ENCODE measurements at regions of chr1 and their contacts with region 1.

Region 1: GRCh38 chr1:31955917-31956736 is 18.0 kb upstream of the PTP4A2 start:
- DNase-seq: peak; percentile 100
- ATAC-seq: peak; percentile 85
- H3K4me3 ChIP-seq: peak overlapping the region; percentile 3; the same call in 1 of the 2 replicates
- H3K27ac ChIP-seq: peak overlapping the region; percentile 96
- H3K4me1 ChIP-seq: peaks cover 23% of the 10 kb centered on the region
- H3K27me3 ChIP-seq: no peaks in the 10 kb centered on the region
- CTCF ChIP-seq: peak; percentile 63
- POLR2A ChIP-seq: peak; percentile 84
- RAD21 ChIP-seq: peak; percentile 74

Region 2: DNA sequence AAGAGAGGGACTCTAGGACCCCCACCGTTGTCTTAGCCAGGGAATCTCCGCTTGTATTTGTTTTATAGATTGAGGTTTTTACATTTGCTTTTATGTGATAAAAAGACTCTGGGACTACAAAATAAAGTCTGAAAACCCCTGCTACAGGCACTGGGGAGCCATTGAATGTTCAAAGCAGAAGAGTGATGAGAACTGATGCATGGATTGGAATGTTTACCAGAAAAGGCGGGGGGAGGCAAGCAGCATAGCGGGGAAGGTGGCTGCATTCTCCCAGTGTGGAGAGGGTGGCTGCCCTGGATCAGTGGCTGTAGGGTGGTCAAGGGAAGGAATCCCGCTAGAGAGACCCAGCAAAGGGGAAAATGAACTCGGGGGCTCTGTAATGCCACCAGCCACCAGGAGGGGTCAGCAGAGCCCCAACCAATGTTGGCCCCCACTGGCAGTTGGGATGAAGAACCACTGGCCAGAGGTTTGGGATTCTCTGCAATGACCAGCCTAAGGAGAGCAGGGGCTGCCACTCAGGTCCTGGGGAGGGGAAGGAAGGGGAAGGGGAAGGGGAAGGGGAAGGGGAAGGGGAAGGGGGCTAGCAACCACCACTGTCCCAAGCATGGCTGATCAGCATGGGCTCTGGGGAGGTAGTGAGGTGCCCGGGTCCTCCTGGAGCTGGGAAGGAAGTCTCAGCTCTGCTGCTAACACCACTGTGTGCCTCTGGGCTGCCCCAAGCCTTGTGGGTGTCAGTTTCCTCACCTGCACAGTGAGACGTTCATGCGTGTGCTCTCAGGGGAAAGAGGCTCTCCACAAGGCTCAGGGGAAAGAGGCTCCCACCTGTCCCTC is 292.3 kb before region 1 on chr1:
- CTCF ChIA-PET with region 1: no interaction called
- POLR2A ChIA-PET with region 1: no interaction called
- dilution Hi-C with region 1: no loop called
- in situ Hi-C with region 1: loop called (anchors 5 kb)
- intact Hi-C with region 1: loop called (anchors 5 kb)
- DNase-seq: peak; percentile 22
- ATAC-seq: peak; percentile 84
- H3K4me3 ChIP-seq: no peak overlapping the region
- H3K27ac ChIP-seq: no peak overlapping the region
- H3K4me1 ChIP-seq: peaks cover 3% of the 10 kb centered on the region
- H3K27me3 ChIP-seq: no peaks in the 10 kb centered on the region
- CTCF ChIP-seq: peak; percentile 95
- POLR2A ChIP-seq: peak; percentile 21; the same call in 1 of the 2 replicates
- RAD21 ChIP-seq: peak; percentile 96

Region 3: DNA sequence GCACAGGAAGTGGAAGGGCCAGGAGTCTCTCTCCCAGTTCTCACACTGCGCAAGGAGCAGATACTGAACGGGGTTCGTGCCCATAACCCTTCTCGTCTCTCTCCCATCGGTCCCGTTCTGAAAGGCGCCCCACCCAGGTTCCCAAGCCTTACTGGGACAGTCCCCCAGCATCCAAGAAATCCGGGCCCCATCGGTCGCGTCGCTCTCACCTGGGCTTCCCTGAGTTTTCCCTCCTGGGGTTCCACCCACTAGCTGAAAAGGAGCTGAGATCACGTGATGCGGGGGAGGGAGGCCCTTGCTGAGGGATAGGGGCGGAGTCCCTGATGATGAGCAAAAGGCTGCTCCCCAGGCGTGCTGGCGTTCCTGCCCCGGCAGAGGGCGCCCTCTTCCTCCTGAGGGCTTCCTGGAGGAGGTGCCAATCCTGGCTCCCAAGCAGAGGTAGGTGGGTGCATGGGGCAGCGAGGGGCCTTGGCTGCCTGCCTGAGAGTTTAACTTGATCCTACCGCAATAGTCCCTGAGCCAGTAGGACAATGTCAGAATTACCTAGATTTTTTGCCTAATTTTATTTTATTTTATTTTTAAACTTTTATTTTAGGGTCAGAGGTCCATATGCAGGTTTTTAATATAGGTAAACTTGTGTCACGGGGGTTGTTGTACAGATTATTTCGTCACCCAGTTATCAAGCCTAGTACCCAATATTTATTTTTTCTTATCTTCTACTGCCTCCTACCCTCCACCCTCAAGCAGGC is 140.2 kb before region 1 on chr1 and contains the start of gene SPOCD1:
- CTCF ChIA-PET with region 1: interaction called, 3 read pairs
- POLR2A ChIA-PET with region 1: no interaction called
- dilution Hi-C with region 1: no loop called
- in situ Hi-C with region 1: loop called (anchors 5 kb)
- intact Hi-C with region 1: no loop called
- DNase-seq: peak; percentile 76
- ATAC-seq: peak; percentile 95
- H3K4me3 ChIP-seq: peak within 1 kb of the TSS; percentile 26; the same call in 1 of the 2 replicates
- H3K27ac ChIP-seq: no peak within 1 kb of the TSS
- H3K4me1 ChIP-seq: peaks cover 3% of the 10 kb centered on the region
- H3K27me3 ChIP-seq: no peaks in the 10 kb centered on the region
- CTCF ChIP-seq: peak; percentile 94
- POLR2A ChIP-seq: no peak
- RAD21 ChIP-seq: peak; percentile 77
- total RNA-seq, gene SPOCD1: 42.2 and 59.7 TPM in 2 replicates

Region 4: DNA sequence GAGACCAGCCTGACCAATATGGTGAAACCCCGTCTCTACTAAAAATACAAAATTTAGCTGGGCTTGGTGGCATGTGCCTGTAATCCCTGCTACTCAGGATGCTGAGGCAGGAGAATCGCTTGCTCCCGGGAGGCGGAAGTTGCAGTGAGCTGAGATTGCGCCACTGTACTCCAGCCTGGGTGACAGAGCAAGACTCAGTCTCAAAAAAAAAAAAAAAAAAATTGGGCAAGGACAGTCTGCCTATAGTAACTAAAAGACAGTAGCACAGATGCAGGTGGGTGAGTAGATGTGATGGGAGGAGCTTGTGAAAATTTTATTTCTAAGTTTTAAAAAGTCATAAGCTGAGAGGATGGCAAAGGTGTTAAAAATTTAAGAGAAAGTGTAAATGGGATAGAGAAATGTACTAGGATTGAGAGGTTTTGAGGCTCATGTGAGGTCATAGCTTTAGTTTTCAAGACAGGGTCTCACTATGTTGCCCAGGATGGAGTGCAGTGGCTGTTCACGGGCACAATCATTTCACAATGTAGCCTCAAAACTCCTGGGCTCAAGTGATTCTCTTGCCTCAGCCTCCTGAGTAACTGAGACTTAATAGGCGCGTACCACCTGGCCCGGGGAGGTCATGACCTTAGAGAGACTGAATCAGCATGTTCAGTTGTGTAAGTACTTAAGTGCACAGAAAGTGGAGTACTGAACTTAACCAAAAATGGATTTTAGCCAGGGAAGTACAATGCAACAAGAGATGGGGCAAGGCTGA is 51.6 kb before region 1 on chr1:
- CTCF ChIA-PET with region 1: no interaction called
- POLR2A ChIA-PET with region 1: no interaction called
- dilution Hi-C with region 1: no loop called
- in situ Hi-C with region 1: no loop called
- intact Hi-C with region 1: loop called (anchors 5 kb)
- DNase-seq: peak; percentile 43
- ATAC-seq: no peak
- H3K4me3 ChIP-seq: no peak overlapping the region
- H3K27ac ChIP-seq: no peak overlapping the region
- H3K4me1 ChIP-seq: peaks cover 1% of the 10 kb centered on the region; the same call in 1 of the 2 replicates
- H3K27me3 ChIP-seq: no peaks in the 10 kb centered on the region
- CTCF ChIP-seq: no peak
- POLR2A ChIP-seq: no peak
- RAD21 ChIP-seq: no peak

Region 5: GRCh38 chr1:31926853-31927660 is 29.1 kb before region 1 on chr1:
- CTCF ChIA-PET with region 1: no interaction called
- POLR2A ChIA-PET with region 1: no interaction called
- dilution Hi-C with region 1: no loop called
- in situ Hi-C with region 1: no loop called
- intact Hi-C with region 1: loop called (anchors 5 kb)
- DNase-seq: no peak
- ATAC-seq: no peak
- H3K4me3 ChIP-seq: no peak overlapping the region
- H3K27ac ChIP-seq: no peak overlapping the region
- H3K4me1 ChIP-seq: peaks cover 15% of the 10 kb centered on the region
- H3K27me3 ChIP-seq: no peaks in the 10 kb centered on the region
- CTCF ChIP-seq: no peak
- POLR2A ChIP-seq: no peak
- RAD21 ChIP-seq: no peak

Region 6: DNA sequence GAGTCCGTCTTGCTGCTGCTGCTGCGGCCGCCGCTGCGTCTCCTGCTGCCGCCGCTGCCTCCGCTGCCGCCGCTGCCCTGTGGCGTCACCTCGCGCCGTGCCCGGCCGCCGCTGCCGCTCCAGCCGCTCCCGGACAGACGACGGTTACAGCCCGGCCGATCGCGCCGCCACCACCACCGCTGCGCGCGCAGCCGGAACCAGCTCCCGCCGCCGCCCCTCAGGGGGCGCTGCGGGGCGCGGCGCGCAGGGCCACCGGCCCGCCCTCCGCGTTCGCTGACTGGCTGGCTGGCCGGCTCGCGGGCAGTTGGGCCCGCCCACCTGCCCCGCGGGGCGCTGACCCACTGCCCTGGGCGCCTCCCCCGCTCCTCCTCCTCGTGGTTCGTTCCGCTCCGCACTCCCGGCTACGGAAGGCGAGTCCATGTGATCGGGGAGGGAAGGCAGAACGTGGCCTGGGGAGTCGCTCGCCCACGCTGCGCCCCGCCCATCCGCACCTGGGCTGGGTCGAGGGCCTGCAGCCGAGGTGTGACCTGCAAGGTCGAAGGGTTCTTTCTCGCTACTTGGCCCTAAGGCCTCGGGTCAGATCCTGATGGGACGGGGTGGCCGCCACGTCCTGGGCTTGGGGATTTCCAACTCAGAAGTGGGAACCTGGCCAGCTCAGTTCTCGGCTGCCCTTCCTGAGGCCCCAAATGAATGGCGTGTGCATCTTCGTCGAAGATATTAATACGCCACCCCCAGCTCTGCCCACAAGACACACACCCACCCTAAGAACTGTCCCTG is 17.8 kb before region 1 on chr1 and contains the start of gene PTP4A2:
- CTCF ChIA-PET with region 1: interaction called, 11 read pairs
- POLR2A ChIA-PET with region 1: interaction called, 8 read pairs
- dilution Hi-C with region 1: no loop called
- in situ Hi-C with region 1: no loop called
- intact Hi-C with region 1: loop called (anchors 1 kb)
- DNase-seq: peak; percentile 88
- ATAC-seq: peak; percentile 89
- H3K4me3 ChIP-seq: peak within 1 kb of the TSS; percentile 66
- H3K27ac ChIP-seq: peak within 1 kb of the TSS; percentile 98
- H3K4me1 ChIP-seq: peaks cover 16% of the 10 kb centered on the region
- H3K27me3 ChIP-seq: no peaks in the 10 kb centered on the region
- CTCF ChIP-seq: peak; percentile 86
- POLR2A ChIP-seq: peak; percentile 78
- RAD21 ChIP-seq: peak; percentile 32; the same call in 1 of the 2 replicates
- total RNA-seq, gene PTP4A2: 328 and 537 TPM in 2 replicates

Region 7: GRCh38 chr1:31944205-31945089 is 11.7 kb before region 1 on chr1:
- CTCF ChIA-PET with region 1: interaction called, 11 read pairs
- POLR2A ChIA-PET with region 1: interaction called, 7 read pairs
- dilution Hi-C with region 1: no loop called
- in situ Hi-C with region 1: no loop called
- intact Hi-C with region 1: no loop called
- DNase-seq: peak; percentile 87
- ATAC-seq: peak; percentile 83
- H3K4me3 ChIP-seq: peak overlapping the region; percentile 4
- H3K27ac ChIP-seq: peak overlapping the region; percentile 93
- H3K4me1 ChIP-seq: peaks cover 16% of the 10 kb centered on the region
- H3K27me3 ChIP-seq: no peaks in the 10 kb centered on the region
- CTCF ChIP-seq: no peak
- POLR2A ChIP-seq: peak; percentile 53
- RAD21 ChIP-seq: no peak

Region 8: DNA sequence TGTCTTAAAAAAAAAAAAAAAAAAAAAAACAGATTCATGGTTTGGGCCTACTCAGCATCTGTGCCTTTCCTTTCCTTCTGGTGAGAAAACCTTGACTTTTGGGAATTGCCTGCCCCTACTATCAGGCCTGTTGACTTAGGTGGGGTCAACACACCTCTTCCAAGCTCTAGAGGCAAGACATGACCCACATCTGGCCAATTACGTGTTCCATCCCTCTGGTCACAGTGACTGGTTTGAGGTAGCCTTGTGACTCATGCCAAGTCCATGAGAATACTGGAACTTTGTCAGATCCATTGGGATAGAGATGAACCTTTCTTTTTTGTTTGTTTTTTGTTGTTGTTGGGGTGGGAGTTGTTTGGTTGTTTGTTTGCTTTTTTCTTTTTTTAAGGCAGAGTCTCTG is 20.3 kb after region 1 on chr1:
- CTCF ChIA-PET with region 1: no interaction called
- POLR2A ChIA-PET with region 1: no interaction called
- dilution Hi-C with region 1: no loop called
- in situ Hi-C with region 1: no loop called
- intact Hi-C with region 1: no loop called
- DNase-seq: peak; percentile 51
- ATAC-seq: no peak
- H3K4me3 ChIP-seq: no peak overlapping the region
- H3K27ac ChIP-seq: no peak overlapping the region
- H3K4me1 ChIP-seq: peaks cover 6% of the 10 kb centered on the region
- H3K27me3 ChIP-seq: peaks cover 6% of the 10 kb centered on the region
- CTCF ChIP-seq: no peak
- POLR2A ChIP-seq: no peak
- RAD21 ChIP-seq: no peak